Heart right ventricle (tissue), 16 donors: ENCODE measurements at regions of chr16 and their contacts with region 1.

Region 1: GRCh38 chr16:10971560-10971961 is 27.2 kb downstream of the CLEC16A start:
- DNase-seq: peak in 1 of 2 donors; percentile 70
- ATAC-seq: peak; percentile 34 to 72 (median 66)
- H3K4me3 ChIP-seq: no peak overlapping the region
- H3K27ac ChIP-seq: no peak overlapping the region
- H3K4me1 ChIP-seq: peaks cover 0 to 31% (median 15%) of the 10 kb centered on the region in 9 donors
- H3K27me3 ChIP-seq: no peaks in the 10 kb centered on the region
- CTCF ChIP-seq: peak; percentile 72 to 87 (median 81)

Region 2: GRCh38 chr16:10876799-10877341 is 94.7 kb before region 1 on chr16 and contains the start of gene CIITA:
- intact Hi-C with region 1: no loop called
- DNase-seq: peak; percentile 65 to 73
- ATAC-seq: peak in 7 of 8 donors; percentile 33 to 59 (median 51)
- H3K4me3 ChIP-seq: peak within 1 kb of the TSS in 6 of 10 donors; percentile 71 to 80 (median 73)
- H3K27ac ChIP-seq: peak within 1 kb of the TSS in 6 of 10 donors; percentile 20 to 88 (median 76)
- H3K4me1 ChIP-seq: peaks cover 4 to 69% (median 22%) of the 10 kb centered on the region in 9 donors
- H3K27me3 ChIP-seq: peaks cover 0 to 39% (median 20%) of the 10 kb centered on the region in 7 donors
- CTCF ChIP-seq: no peak
- total RNA-seq, gene CIITA: 5.1 to 50.8 (median 8.7) TPM

Region 3: DNA sequence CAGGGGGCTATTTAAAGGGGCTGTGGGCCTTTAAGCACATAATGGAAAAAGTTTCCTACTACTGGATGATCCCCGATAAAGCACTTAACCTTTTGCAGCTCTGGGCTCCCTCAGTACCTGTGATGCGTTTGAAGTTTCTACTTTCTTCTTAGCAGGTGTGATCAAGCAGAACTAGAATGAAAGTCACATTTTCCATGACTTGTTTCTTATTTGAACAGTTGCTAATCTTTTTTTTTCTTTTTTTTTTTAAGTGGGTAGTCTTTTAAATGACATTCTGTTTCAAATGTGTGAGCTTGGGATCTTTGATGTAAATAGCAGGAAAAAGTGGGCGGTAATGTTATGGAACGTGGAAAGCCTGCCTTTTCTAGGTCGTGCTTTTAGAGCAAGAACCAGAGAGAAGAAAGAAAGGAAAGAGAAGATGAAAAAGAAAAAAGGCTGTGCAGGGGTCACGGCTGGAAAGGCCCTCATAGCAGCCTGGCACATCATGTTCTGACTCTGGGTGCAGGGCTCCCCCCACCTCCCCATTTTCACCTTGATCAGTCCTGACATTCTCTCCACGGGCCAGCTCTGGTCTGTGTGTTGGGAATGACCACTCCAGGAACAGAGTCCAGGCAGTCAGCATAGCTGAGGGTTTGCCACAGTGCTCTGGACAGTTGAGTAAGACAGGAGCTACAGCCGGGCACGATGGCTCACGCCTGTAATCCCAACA is 123.5 kb after region 1 on chr16:
- intact Hi-C with region 1: loop called in 3 of 10 experiments (anchors 5 to 10 kb)
- DNase-seq: no peak
- ATAC-seq: no peak
- H3K4me3 ChIP-seq: no peak overlapping the region
- H3K27ac ChIP-seq: peak overlapping the region in 1 of 10 donors; percentile 0
- H3K4me1 ChIP-seq: peaks cover 0 to 22% (median 7%) of the 10 kb centered on the region in 9 donors
- H3K27me3 ChIP-seq: no peaks in the 10 kb centered on the region
- CTCF ChIP-seq: no peak

Region 4: DNA sequence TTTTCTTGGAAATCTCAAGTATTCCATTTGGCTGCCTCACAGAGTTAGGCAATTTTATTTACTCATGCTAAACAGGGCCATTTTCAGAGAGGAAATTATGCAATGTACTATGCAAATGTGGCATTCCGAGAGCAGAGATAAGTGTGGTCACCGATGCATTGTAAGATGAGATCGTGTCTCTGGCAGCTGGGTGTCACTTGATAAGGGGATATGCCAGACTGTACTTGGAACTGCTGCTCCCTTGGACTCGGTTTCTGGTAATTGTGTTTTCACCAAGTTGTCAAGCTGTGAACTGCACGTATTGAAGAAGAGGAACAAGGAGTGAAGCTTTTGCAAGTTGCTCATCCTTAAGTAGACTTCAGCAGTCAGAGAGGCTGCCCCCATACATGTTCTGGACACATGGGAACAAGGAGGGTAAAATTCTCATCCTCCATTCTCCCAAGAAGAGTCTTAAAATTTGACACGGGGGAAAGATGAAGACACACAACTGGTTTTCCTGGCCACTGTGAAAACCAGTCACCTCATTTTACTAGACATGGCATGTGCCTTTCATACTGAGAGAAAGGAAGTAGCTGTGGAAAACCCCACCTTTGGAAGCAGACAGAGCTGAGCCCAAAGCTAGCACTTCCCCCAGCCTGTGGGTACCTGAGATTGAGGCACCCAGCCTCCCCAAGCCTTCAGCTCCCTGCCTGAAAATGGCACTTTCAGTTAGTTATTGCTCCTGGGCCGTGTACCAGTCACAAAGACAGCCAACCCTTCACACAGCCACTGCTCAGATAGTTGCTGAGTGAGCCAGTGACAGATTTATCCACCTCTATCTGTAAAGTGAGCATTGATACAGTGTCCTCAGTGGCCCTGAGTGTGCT is 133.7 kb after region 1 on chr16:
- intact Hi-C with region 1: loop called in 2 of 10 experiments (anchors 10 kb)
- DNase-seq: no peak
- ATAC-seq: peak; percentile 19 to 82 (median 42)
- H3K4me3 ChIP-seq: no peak overlapping the region
- H3K27ac ChIP-seq: peak overlapping the region in 5 of 10 donors; percentile 0 to 78 (median 30)
- H3K4me1 ChIP-seq: peaks cover 0 to 64% (median 52%) of the 10 kb centered on the region in 9 donors
- H3K27me3 ChIP-seq: no peaks in the 10 kb centered on the region
- CTCF ChIP-seq: no peak